ENCODE measurements at regions of chr15 and their contacts with region 1.

Region 1: GRCh38 chr15:79896637-79897379 is at the start of gene MTHFS:
- DNase-seq: peak; percentile 93
- total RNA-seq, gene MTHFS: 16.7 TPM

Region 2: DNA sequence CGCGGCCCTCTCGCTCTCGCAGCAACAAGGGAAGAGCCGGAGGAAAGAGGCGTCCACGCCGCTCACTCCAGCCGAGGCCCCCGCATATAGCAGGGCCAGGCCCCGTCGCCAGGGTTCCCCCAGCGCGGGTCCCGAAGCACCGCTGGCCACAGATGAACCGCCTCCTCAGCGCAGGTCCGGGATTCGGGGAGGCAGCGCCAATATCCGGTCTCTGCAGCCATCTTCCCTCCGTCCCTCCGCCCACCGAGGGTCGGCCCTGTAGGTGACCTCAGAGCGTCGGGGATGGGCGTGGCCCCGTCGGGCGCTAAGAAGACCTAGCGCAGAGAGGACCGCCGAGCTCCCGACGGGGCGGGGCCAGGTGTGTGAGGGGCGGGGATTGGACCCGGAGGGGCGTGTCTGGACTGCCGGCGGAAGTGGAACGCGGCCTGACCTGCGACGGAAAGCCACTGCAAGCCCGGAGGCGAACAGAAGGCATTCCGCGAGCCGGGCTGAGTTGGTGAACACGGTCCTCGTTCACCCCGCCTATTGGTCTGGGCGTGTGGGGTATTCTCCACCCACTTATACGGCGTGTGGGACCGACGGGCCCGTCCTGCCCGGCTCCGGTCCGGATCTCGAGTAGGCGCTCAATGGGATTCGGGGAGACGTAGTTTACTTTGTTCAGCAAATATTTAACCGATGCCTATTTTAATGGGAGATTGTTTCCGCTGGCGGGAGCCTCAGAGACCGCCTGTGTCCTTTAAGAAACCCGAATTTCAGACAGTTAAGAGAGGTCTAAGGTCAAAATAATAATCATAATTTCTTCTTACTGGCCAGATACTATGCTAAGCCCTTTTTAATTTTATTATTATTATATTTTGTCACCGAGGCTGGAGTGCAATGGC is 26.9 kb after region 1 on chr15:
- intact Hi-C with region 1: loop called (anchors 2 kb)
- DNase-seq: peak; percentile 99

Measured in cardiac septum (tissue), 1 donor.